ENCODE measurements at regions of chr5 and their contacts with region 1.

Region 1: GRCh38 chr5:43305948-43306565 is 7.2 kb downstream of the HMGCS1 start:
- DNase-seq: no peak
- H3K4me3 Mint-ChIP-seq: peak overlapping the region; percentile 33
- H3K27ac Mint-ChIP-seq: peak overlapping the region; percentile 61
- H3K4me1 Mint-ChIP-seq: peaks cover 87% of the 10 kb centered on the region
- H3K27me3 Mint-ChIP-seq: no peaks in the 10 kb centered on the region

Region 2: DNA sequence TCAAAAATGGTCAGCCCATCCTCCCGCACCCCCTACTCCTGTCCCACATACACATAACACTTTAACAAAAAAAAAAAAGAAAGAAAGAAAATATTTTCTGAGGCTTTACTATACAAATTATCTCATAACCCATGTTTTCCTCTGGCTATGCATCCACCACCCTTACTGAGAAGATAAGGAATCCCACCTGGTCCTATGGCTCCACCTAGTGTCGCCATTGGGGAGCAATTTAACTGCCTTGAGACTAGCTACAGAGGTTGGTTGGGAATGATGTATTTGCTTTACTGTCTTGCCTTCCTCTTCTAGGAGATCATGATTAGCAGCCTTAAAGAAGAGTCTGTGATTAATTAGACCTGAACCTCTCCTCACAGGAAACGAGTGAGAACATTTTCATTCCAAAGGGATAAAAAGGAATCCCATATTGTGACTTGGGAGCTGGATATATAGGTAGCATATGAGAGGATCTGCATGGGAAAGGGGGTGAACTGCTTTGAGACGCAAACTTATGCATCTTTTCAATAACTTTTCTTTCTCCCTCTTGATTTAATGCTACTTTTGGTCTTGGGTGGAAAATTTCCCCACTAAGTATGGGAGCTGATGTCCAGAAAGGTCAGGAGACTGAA is 416.6 kb before region 1 on chr5:
- intact Hi-C with region 1: no loop called
- DNase-seq: peak; percentile 41
- H3K4me3 Mint-ChIP-seq: no peak overlapping the region
- H3K27ac Mint-ChIP-seq: no peak overlapping the region
- H3K4me1 Mint-ChIP-seq: no peaks in the 10 kb centered on the region
- H3K27me3 Mint-ChIP-seq: peaks cover 18% of the 10 kb centered on the region

Region 3: DNA sequence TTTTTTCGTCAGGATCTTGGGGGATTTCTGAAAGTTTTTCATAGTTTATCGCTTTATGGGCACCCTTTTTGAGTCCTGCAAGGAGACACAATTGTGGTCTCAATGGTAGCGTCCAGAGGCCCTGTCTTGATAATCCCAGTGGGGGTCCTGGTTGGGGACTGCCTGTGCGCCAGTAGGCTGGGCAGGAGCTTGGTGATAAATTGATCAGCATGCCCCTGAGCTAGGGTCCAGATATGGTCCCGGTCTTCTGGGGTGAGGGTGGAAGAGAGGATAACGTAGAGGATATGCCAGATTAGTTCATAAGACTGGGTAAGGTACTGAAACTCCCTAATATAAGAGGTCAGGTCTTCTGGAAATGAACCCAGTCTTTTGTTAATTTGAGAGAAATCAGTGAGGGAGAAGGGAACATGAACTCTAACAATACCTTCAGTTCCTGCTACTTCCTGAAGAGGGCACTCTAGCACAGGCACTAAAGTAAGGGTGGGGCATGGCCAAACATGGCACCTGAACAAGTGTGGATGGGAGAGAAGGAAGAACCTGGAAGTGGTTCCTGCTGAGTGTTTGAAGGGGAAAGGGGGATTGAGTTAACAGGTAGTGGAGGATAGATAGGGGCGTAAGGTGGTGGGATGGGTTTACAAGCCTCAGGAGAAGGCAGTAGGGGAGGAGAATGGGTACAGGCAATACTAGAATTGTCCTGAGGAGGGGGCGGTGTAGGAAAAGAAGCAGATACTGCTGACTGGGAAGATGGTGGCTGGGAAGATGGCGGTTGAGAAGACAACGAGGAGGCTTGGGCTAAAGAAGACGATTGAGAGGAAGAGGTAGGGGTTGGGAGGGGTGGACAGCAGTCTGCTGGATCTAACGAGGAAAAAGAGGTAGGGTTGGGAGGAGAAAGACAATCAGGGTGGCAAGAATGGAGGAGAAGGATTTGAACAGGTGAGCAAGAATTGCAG is 232.2 kb before region 1 on chr5:
- intact Hi-C with region 1: loop called (anchors 1 kb)
- DNase-seq: peak; percentile 42
- H3K4me3 Mint-ChIP-seq: no peak overlapping the region
- H3K27ac Mint-ChIP-seq: peak overlapping the region; percentile 41
- H3K4me1 Mint-ChIP-seq: peaks cover 45% of the 10 kb centered on the region
- H3K27me3 Mint-ChIP-seq: no peaks in the 10 kb centered on the region

Region 4: GRCh38 chr5:43191740-43192557 is 114.1 kb before region 1 on chr5 and contains the start of gene NIM1K:
- intact Hi-C with region 1: loop called (anchors 1 kb)
- DNase-seq: peak; percentile 39
- H3K4me3 Mint-ChIP-seq: peak within 1 kb of the TSS; percentile 85
- H3K27ac Mint-ChIP-seq: peak within 1 kb of the TSS; percentile 89
- H3K4me1 Mint-ChIP-seq: peaks cover 40% of the 10 kb centered on the region
- H3K27me3 Mint-ChIP-seq: peaks cover 22% of the 10 kb centered on the region
- total RNA-seq, gene NIM1K: 0.39 and 0.67 TPM in 2 replicates

Region 5: DNA sequence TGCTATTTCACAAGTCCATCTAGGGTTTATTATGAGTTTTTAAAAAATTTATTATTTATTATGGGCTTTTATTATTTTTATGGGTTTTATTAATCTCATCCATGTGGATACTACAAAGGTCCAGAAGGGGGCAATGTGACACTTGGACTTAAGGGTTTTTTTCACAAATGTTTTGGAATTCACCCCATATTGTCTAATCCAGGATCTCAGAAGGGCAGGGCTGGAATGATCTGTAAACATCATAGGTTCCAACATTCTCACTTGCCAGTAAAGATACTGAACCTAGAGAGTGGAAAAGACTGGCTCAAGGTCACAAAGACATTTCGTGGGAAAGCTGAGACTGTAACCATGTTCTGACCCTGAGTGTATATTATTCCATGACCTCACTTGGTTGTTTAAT is 78.4 kb before region 1 on chr5:
- intact Hi-C with region 1: loop called (anchors 2 kb)
- DNase-seq: no peak
- H3K4me3 Mint-ChIP-seq: no peak overlapping the region
- H3K27ac Mint-ChIP-seq: no peak overlapping the region
- H3K4me1 Mint-ChIP-seq: no peaks in the 10 kb centered on the region
- H3K27me3 Mint-ChIP-seq: no peaks in the 10 kb centered on the region

Region 6: GRCh38 chr5:43233946-43234345 is 72.1 kb before region 1 on chr5:
- intact Hi-C with region 1: loop called (anchors 2 kb)
- DNase-seq: no peak
- H3K4me3 Mint-ChIP-seq: no peak overlapping the region
- H3K27ac Mint-ChIP-seq: no peak overlapping the region
- H3K4me1 Mint-ChIP-seq: peaks cover 11% of the 10 kb centered on the region
- H3K27me3 Mint-ChIP-seq: peaks cover 4% of the 10 kb centered on the region

Region 7: GRCh38 chr5:43294226-43294625 is 11.8 kb before region 1 on chr5:
- intact Hi-C with region 1: no loop called
- DNase-seq: no peak
- H3K4me3 Mint-ChIP-seq: no peak overlapping the region
- H3K27ac Mint-ChIP-seq: no peak overlapping the region
- H3K4me1 Mint-ChIP-seq: peaks cover 40% of the 10 kb centered on the region
- H3K27me3 Mint-ChIP-seq: no peaks in the 10 kb centered on the region

Measured in activated T-helper 1 cell treated with anti-CD3 and anti-CD28 coated beads, Interleukin-12 subunit alpha, Interleukin-12 subunit beta, Interleukin-2, Interleukin-4 antibody, amounts not matched to agents 30 ng/mL and 10 ng/mL and 1 ng/mL, durations not matched to agents 14 hours and 24 hours and 36 hours (primary cell).